ENCODE measurements at regions of chr11 and their contacts with region 1.

Region 1: DNA sequence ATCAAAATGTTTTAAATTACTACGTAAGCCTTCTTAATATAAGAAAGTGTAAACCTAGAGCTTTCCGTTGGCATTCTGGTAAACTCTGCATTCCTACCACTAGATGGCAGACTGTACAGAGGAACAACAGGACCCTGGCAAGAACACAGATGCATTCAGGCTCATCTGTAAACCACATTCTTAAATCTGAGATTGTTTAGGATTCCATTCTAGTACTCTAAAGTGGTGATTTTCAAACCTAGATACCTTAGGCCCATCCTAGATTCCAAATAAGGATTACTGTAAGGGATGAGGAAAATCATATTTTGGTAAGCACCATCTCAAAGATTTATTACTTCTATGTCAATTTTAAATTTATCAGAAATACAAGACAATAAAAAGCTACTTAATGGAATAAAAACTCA is 26.9 kb downstream of the PICALM start:
- DNase-seq: peak; percentile 88
- H3K4me3 Mint-ChIP-seq: peak overlapping the region; percentile 45
- H3K27ac Mint-ChIP-seq: peak overlapping the region; percentile 73
- H3K4me1 Mint-ChIP-seq: peaks cover 57% of the 10 kb centered on the region
- H3K27me3 Mint-ChIP-seq: no peaks in the 10 kb centered on the region

Region 2: GRCh38 chr11:85988780-85989179 is 53.2 kb before region 1 on chr11:
- intact Hi-C with region 1: no loop called
- DNase-seq: no peak
- H3K4me3 Mint-ChIP-seq: no peak overlapping the region
- H3K27ac Mint-ChIP-seq: peak overlapping the region; percentile 51
- H3K4me1 Mint-ChIP-seq: peaks cover 16% of the 10 kb centered on the region
- H3K27me3 Mint-ChIP-seq: no peaks in the 10 kb centered on the region

Region 3: DNA sequence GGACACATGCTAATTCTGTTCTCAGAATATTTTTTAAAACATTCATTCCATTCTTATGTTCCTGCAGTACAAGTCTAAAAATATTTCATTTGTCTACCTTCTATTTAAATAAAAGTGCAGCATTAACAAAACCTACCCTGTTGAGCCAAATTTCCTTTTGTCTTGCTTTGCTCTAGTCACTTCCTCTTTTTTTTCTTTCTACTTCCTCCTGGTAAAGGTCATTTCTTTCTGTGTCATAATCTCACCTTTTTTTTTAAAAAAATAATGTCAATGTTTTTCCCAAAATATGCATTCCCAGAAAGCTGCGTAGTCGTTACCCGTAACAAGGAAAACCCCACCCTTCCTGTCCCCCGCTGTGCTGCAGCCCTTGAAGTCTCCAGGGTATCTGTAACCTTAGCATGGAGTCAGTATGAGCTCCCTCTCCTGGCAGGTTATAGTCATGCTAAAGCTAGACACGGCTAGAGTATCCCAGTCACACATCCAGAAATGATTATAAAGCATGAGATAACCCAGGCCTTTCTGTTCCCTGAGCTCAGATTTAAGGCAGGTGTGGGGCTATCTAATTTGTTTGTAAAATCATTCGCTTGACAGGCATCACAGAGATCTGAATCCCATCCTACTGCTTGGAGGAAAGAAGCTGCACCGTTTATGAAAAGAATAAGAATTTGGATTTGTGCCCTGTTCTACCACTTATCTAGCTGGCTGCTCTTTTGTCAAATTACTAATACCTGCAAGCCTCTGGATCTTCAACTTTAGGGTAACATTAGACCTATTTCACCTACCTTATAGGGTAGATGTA is 151.5 kb after region 1 on chr11:
- intact Hi-C with region 1: loop called (anchors 1 kb)
- DNase-seq: peak; percentile 89
- H3K4me3 Mint-ChIP-seq: peak overlapping the region; percentile 70
- H3K27ac Mint-ChIP-seq: peak overlapping the region; percentile 73
- H3K4me1 Mint-ChIP-seq: peaks cover 30% of the 10 kb centered on the region
- H3K27me3 Mint-ChIP-seq: no peaks in the 10 kb centered on the region